WTC11 (cell line): ENCODE measurements at regions of chr11 and their contacts with region 1.

Region 1: DNA sequence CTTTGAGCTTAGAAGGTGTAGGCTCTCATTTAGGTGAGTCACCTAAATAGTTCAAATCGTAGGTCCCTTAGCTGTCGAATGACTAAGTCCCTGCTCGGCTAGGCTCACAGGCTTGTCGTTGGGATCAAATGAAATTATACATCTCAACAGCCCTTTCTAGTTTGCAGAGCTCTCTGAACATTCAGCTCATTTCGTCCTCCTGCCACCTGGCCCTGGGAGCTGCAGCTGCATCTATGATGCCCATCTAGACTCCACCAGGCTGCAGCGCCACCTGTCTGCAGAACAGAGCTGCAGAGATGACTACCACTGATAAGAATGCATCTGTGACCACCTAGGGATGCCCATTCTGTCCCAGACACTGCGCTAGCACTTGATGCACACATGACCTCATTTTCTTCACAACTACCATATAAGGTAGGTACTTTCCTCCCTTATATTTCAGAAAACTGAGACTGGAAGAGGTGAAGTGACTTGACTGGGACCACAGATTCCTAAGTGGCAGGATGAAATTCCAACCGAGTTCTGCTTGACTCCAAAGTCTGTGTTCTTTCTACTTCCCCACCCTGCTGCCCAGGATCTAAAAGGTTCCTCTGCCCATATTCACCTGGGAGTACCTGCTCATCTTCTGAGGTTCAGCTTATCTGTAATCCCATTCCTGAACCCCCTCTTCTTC is 141.1 kb upstream of the NARS2 start:
- DNase-seq: peak; percentile 89
- ATAC-seq: peak; percentile 99
- H3K4me3 Mint-ChIP-seq: no peak overlapping the region
- H3K27ac Mint-ChIP-seq: no peak overlapping the region
- H3K4me1 Mint-ChIP-seq: peaks cover 7% of the 10 kb centered on the region
- H3K27me3 Mint-ChIP-seq: no peaks in the 10 kb centered on the region
- CTCF ChIP-seq: peak; percentile 73

Region 2: GRCh38 chr11:78676026-78676557 is 39.7 kb before region 1 on chr11:
- CTCF ChIA-PET with region 1: interaction called, 26 read pairs
- POLR2A ChIA-PET with region 1: no interaction called
- DNase-seq: no peak
- ATAC-seq: peak; percentile 74
- H3K4me3 Mint-ChIP-seq: no peak overlapping the region
- H3K27ac Mint-ChIP-seq: no peak overlapping the region
- H3K4me1 Mint-ChIP-seq: peaks cover 2% of the 10 kb centered on the region; the same call in 1 of the 2 replicates
- H3K27me3 Mint-ChIP-seq: no peaks in the 10 kb centered on the region
- CTCF ChIP-seq: no peak

Region 3: DNA sequence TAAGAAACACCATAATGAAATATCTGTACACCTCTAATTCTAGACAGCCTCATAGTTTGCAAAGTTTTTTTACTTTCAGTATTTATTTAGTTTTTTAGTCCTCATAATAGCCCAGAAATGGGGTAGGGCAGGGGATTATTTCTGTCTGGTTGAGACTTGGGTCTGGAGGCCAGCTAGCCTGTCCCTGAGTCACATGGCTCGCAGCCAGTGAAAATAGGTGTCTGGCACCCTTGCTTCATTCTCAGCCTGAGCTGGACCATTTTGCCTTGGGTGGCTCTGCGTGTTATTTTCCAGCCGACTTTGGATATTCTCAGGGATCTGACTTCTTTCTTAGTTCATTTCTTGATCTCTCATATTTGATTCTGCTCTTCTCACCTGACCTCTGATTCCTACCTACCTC is 17.2 kb before region 1 on chr11:
- CTCF ChIA-PET with region 1: interaction called, 28 read pairs
- POLR2A ChIA-PET with region 1: no interaction called
- DNase-seq: no peak
- ATAC-seq: no peak
- H3K4me3 Mint-ChIP-seq: no peak overlapping the region
- H3K27ac Mint-ChIP-seq: no peak overlapping the region
- H3K4me1 Mint-ChIP-seq: no peaks in the 10 kb centered on the region
- H3K27me3 Mint-ChIP-seq: no peaks in the 10 kb centered on the region
- CTCF ChIP-seq: no peak

Region 4: GRCh38 chr11:78961247-78961646 is 245.5 kb after region 1 on chr11:
- CTCF ChIA-PET with region 1: interaction called, 31 read pairs
- POLR2A ChIA-PET with region 1: interaction called, 3 read pairs
- DNase-seq: peak; percentile 61
- ATAC-seq: peak; percentile 89
- H3K4me3 Mint-ChIP-seq: peak overlapping the region; percentile 72
- H3K27ac Mint-ChIP-seq: no peak overlapping the region
- H3K4me1 Mint-ChIP-seq: peaks cover 33% of the 10 kb centered on the region
- H3K27me3 Mint-ChIP-seq: peaks cover 17% of the 10 kb centered on the region
- CTCF ChIP-seq: peak; percentile 21; the same call in 1 of the 2 replicates